ENCODE measurements at regions of chr17 and their contacts with region 1.

Region 1: DNA sequence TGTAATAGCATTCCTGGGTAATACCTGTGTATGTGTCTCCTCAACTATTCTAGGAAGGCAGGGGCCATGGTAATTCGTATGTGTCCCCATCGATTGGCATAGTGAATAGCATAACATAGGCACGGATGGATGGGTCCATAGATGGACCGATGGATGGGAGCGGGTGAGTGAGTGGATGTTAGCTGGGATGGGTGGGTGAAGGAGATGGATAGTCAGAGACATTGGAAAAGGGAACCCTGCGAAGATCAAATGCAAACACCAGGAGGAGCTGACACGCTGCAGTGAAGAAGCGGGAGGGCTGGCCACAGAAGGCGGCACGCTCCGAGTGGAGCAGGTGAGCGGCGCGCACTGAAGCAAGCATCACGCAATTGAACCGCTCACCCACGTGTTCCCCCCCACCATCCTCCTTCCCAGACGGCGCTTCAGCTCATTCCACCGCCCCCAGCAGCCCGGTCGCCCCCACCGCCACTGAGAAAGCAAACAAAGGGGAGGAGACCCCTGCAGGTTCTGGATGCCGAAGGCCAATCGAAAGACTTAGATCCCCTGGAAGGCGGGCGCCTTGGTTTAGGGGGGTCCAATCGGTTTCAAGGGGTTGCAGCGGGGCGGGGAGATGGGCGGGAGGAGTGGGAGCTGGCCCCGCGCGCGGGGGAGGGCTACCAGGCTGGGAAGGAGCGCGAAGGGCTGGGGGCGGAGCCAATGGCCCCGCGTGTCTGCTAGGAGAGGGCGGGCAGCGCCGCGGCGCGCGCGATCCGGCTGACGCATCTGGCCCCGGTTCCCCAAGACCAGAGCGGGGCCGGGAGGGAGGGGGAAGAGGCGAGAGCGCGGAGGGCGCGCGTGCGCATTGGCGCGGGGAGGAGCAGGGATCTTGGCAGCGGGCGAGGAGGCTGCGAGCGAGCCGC is at the start of gene ARRB2:
- DNase-seq: peak; percentile 99
- ATAC-seq: peak; percentile 87
- H3K4me3 ChIP-seq: peak within 1 kb of the TSS; percentile 65 to 90 (median 75)
- H3K4me3 Mint-ChIP-seq: peak within 1 kb of the TSS; percentile 86
- H3K27ac ChIP-seq: peak within 1 kb of the TSS; percentile 60 to 74
- H3K27ac Mint-ChIP-seq: peak within 1 kb of the TSS; percentile 88
- H3K4me1 ChIP-seq: peaks cover 28 to 38% of the 10 kb centered on the region in 2 donors
- H3K4me1 Mint-ChIP-seq: peaks cover 43% of the 10 kb centered on the region
- H3K27me3 ChIP-seq: no peaks in the 10 kb centered on the region
- H3K27me3 Mint-ChIP-seq: no peaks in the 10 kb centered on the region
- CTCF ChIP-seq: peak; percentile 76
- total RNA-seq, gene ARRB2: 148 and 164 TPM in 2 replicates

Region 2: GRCh38 chr17:4658478-4659305 is 51.4 kb before region 1 on chr17:
- CTCF ChIA-PET with region 1: no interaction called
- POLR2A ChIA-PET with region 1: no interaction called
- intact Hi-C with region 1: no loop called
- DNase-seq: no peak
- ATAC-seq: no peak
- H3K4me3 ChIP-seq: no peak overlapping the region
- H3K4me3 Mint-ChIP-seq: no peak overlapping the region
- H3K27ac ChIP-seq: no peak overlapping the region
- H3K27ac Mint-ChIP-seq: no peak overlapping the region
- H3K4me1 ChIP-seq: no peaks in the 10 kb centered on the region
- H3K4me1 Mint-ChIP-seq: no peaks in the 10 kb centered on the region
- H3K27me3 ChIP-seq: peaks cover 0 to 9% (median 0%) of the 10 kb centered on the region in 4 experiments
- H3K27me3 Mint-ChIP-seq: peaks cover 26% of the 10 kb centered on the region
- CTCF ChIP-seq: no peak

Region 3: DNA sequence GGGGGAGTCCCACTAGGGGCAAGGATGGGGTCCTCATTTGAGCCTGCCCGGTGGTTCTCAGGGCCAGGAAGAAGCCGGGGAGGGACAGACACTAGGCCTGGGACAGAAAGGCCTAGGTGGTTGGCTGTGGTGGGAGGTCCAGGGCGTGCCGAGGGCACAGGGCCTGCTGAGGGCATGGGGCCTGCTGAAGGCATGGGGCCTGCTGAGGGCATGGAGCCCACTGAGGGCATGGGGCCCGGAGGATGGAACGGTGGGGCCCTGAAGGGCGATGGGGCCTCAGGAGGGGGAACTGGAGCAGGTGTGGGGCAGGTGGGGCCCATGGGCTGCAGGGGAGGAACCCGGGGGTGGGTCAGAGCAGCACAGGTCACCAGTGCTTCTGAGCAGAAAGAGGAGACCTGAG is 37.3 kb before region 1 on chr17:
- CTCF ChIA-PET with region 1: no interaction called
- POLR2A ChIA-PET with region 1: no interaction called
- intact Hi-C with region 1: no loop called
- DNase-seq: no peak
- ATAC-seq: no peak
- H3K4me3 ChIP-seq: no peak overlapping the region
- H3K4me3 Mint-ChIP-seq: no peak overlapping the region
- H3K27ac ChIP-seq: no peak overlapping the region
- H3K27ac Mint-ChIP-seq: no peak overlapping the region
- H3K4me1 ChIP-seq: no peaks in the 10 kb centered on the region
- H3K4me1 Mint-ChIP-seq: no peaks in the 10 kb centered on the region
- H3K27me3 ChIP-seq: no peaks in the 10 kb centered on the region
- H3K27me3 Mint-ChIP-seq: no peaks in the 10 kb centered on the region
- CTCF ChIP-seq: no peak

Region 4: GRCh38 chr17:4733073-4733531 is 23.1 kb after region 1 on chr17:
- CTCF ChIA-PET with region 1: interaction called, 17 read pairs
- POLR2A ChIA-PET with region 1: interaction called, 6 read pairs
- intact Hi-C with region 1: loop called (anchors 1 kb)
- DNase-seq: peak; percentile 89
- ATAC-seq: peak; percentile 59
- H3K4me3 ChIP-seq: no peak overlapping the region
- H3K4me3 Mint-ChIP-seq: peak overlapping the region; percentile 65
- H3K27ac ChIP-seq: peak overlapping the region; percentile 66 to 68
- H3K27ac Mint-ChIP-seq: peak overlapping the region; percentile 93
- H3K4me1 ChIP-seq: peaks cover 33 to 47% of the 10 kb centered on the region in 2 donors
- H3K4me1 Mint-ChIP-seq: peaks cover 49% of the 10 kb centered on the region
- H3K27me3 ChIP-seq: no peaks in the 10 kb centered on the region
- H3K27me3 Mint-ChIP-seq: no peaks in the 10 kb centered on the region
- CTCF ChIP-seq: peak; percentile 76

Region 5: DNA sequence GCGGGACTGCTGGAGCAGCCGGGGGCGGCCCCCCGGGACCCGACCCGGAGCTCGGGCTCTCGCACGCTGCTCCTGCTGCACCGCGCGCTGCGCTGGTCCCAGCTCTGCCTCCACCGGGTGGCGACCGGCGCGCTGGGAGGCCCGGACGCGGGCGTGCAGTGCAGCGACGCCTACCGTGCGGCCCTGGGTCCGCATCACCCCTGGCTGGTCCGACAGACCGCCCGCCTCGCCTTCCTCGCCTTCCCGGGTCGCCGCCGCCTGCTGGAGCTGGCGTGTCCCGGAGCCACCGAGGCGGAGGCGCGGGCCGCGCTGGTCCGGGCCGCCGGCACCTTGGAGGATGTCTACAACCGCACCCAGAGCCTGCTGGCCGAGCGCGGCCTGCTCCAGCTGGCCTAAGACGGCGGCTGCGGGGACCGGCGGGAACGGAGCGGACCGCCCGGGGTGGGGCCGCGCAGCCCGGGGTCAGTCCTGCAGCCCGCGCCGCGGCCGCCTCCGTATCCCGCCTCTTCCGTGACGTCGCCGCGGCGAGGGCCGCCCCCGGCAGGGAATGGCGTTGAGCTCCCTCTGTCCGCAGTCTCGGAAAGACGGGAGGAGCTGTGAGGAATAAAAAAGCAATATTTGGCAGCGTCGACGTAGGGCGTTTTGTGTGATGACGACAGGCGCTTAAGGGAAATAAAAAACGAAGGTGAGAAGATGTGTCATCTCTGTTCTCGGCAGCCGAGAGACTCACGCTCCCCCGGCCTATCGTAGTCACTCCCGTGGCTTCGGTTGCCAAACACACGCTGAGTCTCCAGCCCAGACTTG is 80.1 kb after region 1 on chr17:
- CTCF ChIA-PET with region 1: interaction called, 36 read pairs
- POLR2A ChIA-PET with region 1: no interaction called
- intact Hi-C with region 1: loop called (anchors 1 kb)
- DNase-seq: peak; percentile 89
- ATAC-seq: peak; percentile 94
- H3K4me3 ChIP-seq: peak overlapping the region; percentile 27 to 70 (median 63)
- H3K4me3 Mint-ChIP-seq: peak overlapping the region; percentile 94
- H3K27ac ChIP-seq: peak overlapping the region in 1 of 2 donors; percentile 53
- H3K27ac Mint-ChIP-seq: peak overlapping the region; percentile 93
- H3K4me1 ChIP-seq: peaks cover 28 to 33% of the 10 kb centered on the region in 2 donors
- H3K4me1 Mint-ChIP-seq: peaks cover 30% of the 10 kb centered on the region
- H3K27me3 ChIP-seq: peaks cover 0 to 44% (median 27%) of the 10 kb centered on the region in 4 experiments
- H3K27me3 Mint-ChIP-seq: peaks cover 27% of the 10 kb centered on the region
- CTCF ChIP-seq: peak; percentile 81

Region 6: DNA sequence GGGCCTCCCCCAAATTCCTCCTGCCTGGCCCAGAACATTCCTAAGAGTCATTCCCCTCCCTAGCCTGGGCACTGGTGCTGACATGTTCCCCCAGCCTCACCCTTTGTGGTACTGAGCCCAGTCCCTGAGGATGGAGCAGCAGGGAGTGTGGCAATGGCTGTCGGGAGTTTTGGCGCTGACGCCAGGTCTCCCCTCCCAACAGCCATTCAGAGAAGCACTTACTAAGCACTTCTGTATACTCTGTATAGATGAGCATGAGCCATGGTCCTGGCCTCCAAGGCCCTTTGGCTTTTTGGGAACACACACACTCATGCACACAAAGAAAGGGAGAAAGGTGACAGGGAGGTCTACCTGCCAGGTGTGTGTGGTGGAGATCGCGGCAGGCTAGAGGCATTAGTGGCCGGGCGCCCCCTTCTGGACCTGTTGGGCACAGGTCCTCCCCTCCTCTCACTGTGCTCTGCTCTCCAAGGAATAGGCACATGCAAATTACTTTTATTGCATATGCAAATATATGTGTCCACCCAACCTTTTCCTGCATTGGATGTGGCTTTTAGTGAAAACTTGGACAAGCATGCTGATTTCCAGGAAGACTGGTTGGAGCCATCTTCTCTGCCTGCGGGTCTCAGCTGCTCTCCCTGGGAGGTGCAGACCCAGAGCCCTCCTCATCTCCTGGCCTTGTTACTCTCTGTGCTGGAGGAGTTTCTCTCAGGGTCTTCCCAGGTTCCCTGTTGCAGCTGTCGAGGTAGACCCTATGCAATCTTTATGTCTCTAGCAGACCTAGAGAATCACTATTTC is 171.9 kb after region 1 on chr17:
- CTCF ChIA-PET with region 1: interaction called, 38 read pairs
- POLR2A ChIA-PET with region 1: interaction called, 11 read pairs
- intact Hi-C with region 1: loop called (anchors 1 kb)
- DNase-seq: peak; percentile 78
- ATAC-seq: peak; percentile 92
- H3K4me3 ChIP-seq: no peak overlapping the region
- H3K4me3 Mint-ChIP-seq: no peak overlapping the region
- H3K27ac ChIP-seq: no peak overlapping the region
- H3K27ac Mint-ChIP-seq: no peak overlapping the region
- H3K4me1 ChIP-seq: peaks cover 0 to 6% of the 10 kb centered on the region in 2 donors
- H3K4me1 Mint-ChIP-seq: peaks cover 3% of the 10 kb centered on the region
- H3K27me3 ChIP-seq: no peaks in the 10 kb centered on the region
- H3K27me3 Mint-ChIP-seq: no peaks in the 10 kb centered on the region
- CTCF ChIP-seq: peak; percentile 83

Region 7: DNA sequence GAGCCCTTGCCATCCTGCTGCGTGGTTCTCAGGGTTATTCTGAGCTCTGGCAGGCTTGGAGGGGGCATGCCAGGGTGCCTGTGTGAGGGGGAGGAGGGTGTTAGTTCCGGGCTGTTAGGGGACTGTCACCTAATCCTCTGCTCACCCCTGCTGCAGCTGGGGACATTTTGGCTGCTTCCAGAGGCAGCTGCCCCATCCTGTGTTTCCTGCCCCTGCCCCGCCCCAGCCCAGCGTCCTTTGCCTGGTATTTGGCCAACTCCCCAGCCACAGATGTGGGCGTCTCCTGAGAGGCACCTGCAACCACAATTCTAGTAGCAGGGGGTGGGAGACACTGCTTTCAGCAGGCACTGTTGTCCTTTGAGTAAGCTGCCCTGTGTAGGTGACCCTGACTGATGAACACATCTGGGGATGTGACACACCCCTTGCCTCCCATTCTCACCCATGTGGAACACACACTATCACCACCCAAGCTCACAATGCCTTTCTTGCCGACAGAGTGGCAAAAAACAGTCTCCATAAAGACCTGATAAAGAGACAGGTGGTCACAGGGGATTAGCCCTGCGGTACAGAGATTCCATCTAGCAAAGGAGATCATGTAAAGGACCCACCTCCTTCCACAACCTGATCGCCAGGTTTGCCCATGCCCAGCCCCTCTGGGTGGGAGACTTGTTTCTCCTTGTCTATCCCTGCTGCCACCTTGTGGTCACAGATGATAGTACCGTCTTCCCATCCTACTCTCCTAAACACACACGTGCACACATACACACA is 193.2 kb after region 1 on chr17 and contains the start of gene CHRNE:
- CTCF ChIA-PET with region 1: interaction called, 5 read pairs
- POLR2A ChIA-PET with region 1: no interaction called
- intact Hi-C with region 1: loop called (anchors 1 kb)
- DNase-seq: peak; percentile 87
- ATAC-seq: peak; percentile 38
- H3K4me3 ChIP-seq: peak within 1 kb of the TSS in 1 of 5 experiments; percentile 38
- H3K4me3 Mint-ChIP-seq: peak within 1 kb of the TSS; percentile 72
- H3K27ac ChIP-seq: peak within 1 kb of the TSS in 1 of 2 donors; percentile 22
- H3K27ac Mint-ChIP-seq: peak within 1 kb of the TSS; percentile 82
- H3K4me1 ChIP-seq: peaks cover 45 to 53% of the 10 kb centered on the region in 2 donors
- H3K4me1 Mint-ChIP-seq: peaks cover 45% of the 10 kb centered on the region
- H3K27me3 ChIP-seq: peaks cover 0 to 29% (median 10%) of the 10 kb centered on the region in 4 experiments
- H3K27me3 Mint-ChIP-seq: peaks cover 7% of the 10 kb centered on the region
- CTCF ChIP-seq: peak; percentile 83
- total RNA-seq, gene CHRNE: 0.99 and 1.0 TPM in 2 replicates

Measured in B cell (primary cell).